SK-N-SH (cell line): ENCODE measurements at regions of chr10 and their contacts with region 1.

Region 1: GRCh38 chr10:87850742-87851205 is 12.6 kb downstream of the KLLN start:
- DNase-seq: peak; percentile 57
- H3K4me3 ChIP-seq: no peak overlapping the region; a peak in 1 of 4 replicates
- H3K27ac ChIP-seq: no peak overlapping the region
- H3K4me1 ChIP-seq: peaks cover 2 to 4% of the 10 kb centered on the region in 2 experiments; a peak in 2 of 4 replicates
- H3K27me3 ChIP-seq: no peaks in the 10 kb centered on the region
- CTCF ChIP-seq: peak; percentile 65
- EP300 ChIP-seq: no peak
- RAD21 ChIP-seq: peak; percentile 90

Region 2: DNA sequence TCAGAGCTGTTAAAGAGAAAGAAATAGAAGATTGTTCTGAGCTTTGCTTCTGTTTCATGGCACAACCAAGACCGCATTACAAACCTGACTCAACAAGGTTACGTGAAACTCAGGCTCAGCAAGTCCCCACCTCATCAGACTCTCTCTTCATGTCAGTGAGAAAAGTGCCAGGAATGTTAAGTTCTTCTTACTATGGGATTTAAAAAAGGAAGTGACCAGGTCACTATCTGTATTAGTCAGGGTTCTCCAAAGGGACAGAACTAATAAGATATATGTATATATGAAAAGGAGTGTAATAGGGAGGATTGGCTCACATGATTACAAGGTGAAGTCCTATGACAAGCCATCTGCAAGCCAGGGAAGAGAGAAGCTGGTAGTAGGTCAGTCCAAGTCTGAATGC is 216.5 kb before region 1 on chr10:
- CTCF ChIA-PET with region 1: no interaction called
- POLR2A ChIA-PET with region 1: no interaction called
- DNase-seq: no peak
- H3K4me3 ChIP-seq: no peak overlapping the region
- H3K27ac ChIP-seq: no peak overlapping the region
- H3K4me1 ChIP-seq: peaks cover 0 to 10% of the 10 kb centered on the region in 2 experiments; a peak in 1 of 4 replicates
- H3K27me3 ChIP-seq: no peaks in the 10 kb centered on the region
- CTCF ChIP-seq: no peak
- EP300 ChIP-seq: no peak
- RAD21 ChIP-seq: no peak

Region 3: GRCh38 chr10:87817609-87818504 is 32.9 kb before region 1 on chr10 and contains the start of gene ATAD1:
- CTCF ChIA-PET with region 1: interaction called, 18 read pairs
- POLR2A ChIA-PET with region 1: interaction called, 6 read pairs
- DNase-seq: peak; percentile 92
- H3K4me3 ChIP-seq: peak within 1 kb of the TSS; percentile 86 to 94
- H3K27ac ChIP-seq: peak within 1 kb of the TSS; percentile 91 to 95
- H3K4me1 ChIP-seq: peaks cover 10 to 12% of the 10 kb centered on the region in 2 experiments; a peak in 3 of 4 replicates
- H3K27me3 ChIP-seq: no peaks in the 10 kb centered on the region
- CTCF ChIP-seq: peak; percentile 47
- EP300 ChIP-seq: no peak
- RAD21 ChIP-seq: no peak
- polyA plus RNA-seq, gene ATAD1: 13.5 and 21.0 TPM in 2 replicates

Region 4: DNA sequence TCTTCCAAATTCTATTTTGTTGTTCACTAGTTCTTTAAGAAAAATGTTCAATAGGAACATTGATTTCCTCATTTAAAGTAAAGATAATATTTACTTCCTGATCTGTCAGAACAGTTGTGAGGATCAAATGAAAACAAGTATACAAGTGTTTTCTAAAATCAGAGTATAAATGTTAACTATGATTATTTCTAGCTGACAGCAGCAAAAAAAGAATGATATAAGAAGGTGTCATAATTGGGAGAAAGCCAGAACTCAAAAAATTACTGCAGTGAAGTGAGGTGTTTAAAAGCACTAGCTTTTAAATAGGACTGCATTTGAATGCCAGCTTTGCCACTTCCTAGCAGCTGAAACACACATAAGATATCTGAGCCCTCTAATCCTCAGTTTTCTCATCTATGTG is 449.0 kb after region 1 on chr10:
- CTCF ChIA-PET with region 1: no interaction called
- POLR2A ChIA-PET with region 1: no interaction called
- DNase-seq: no peak
- H3K4me3 ChIP-seq: no peak overlapping the region
- H3K27ac ChIP-seq: no peak overlapping the region
- H3K4me1 ChIP-seq: no peaks in the 10 kb centered on the region; a peak in 1 of 4 replicates
- H3K27me3 ChIP-seq: no peaks in the 10 kb centered on the region
- CTCF ChIP-seq: no peak
- EP300 ChIP-seq: no peak
- RAD21 ChIP-seq: no peak

Region 5: DNA sequence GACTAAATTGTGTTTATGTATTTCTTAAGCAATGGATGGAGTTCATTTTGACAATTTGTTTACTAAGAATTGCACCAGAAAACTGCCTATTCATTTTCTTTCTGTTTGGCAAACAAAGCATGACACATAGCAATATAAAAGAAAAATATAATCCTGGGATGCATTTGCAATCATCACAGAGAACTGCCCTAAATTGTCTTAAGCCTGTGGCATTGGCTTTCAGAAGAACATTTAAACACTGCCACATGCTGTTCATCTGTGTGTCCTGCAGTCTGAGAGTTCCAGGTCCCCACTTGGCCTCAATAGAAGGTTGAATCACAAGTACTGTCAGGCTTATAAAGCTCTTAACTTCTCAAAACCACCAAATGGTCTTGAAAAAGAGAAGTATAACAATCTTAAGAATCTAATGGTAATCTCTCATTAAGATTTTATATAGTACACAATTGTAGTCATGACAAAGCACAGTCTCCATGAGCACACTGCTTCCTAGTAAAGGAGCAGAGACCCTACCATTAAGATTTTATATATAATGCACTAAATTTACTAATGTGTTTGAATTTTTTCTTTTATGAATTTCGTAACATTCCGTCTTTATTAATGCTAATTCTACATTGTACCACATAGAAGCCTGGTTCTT is 702.5 kb after region 1 on chr10:
- CTCF ChIA-PET with region 1: interaction called, 55 read pairs
- POLR2A ChIA-PET with region 1: no interaction called
- DNase-seq: peak; percentile 48
- H3K4me3 ChIP-seq: no peak overlapping the region
- H3K27ac ChIP-seq: peak overlapping the region in 1 of 2 experiments; percentile 34; a peak in 1 of 4 replicates
- H3K4me1 ChIP-seq: peaks cover 8% of the 10 kb centered on the region in 2 experiments; a peak in 2 of 4 replicates
- H3K27me3 ChIP-seq: no peaks in the 10 kb centered on the region
- CTCF ChIP-seq: peak; percentile 85
- EP300 ChIP-seq: no peak
- RAD21 ChIP-seq: peak; percentile 98